HAP-1 (cell line): ENCODE measurements at regions of chr3 and their contacts with region 1.

Region 1: GRCh38 chr3:47522082-47522987 is 8.8 kb upstream of the ELP6 start:
- DNase-seq: peak; percentile 92
- H3K4me3 ChIP-seq: no peak overlapping the region
- H3K4me1 ChIP-seq: peaks cover 17% of the 10 kb centered on the region
- H3K27me3 ChIP-seq: no peaks in the 10 kb centered on the region

Region 2: GRCh38 chr3:47781685-47782445 is 259.5 kb after region 1 on chr3 and contains the start of gene SMARCC1:
- in situ Hi-C with region 1: loop called (anchors 5 kb)
- DNase-seq: peak; percentile 94 to 99
- H3K4me3 ChIP-seq: peak within 1 kb of the TSS; percentile 57
- H3K4me1 ChIP-seq: peaks cover 10% of the 10 kb centered on the region
- H3K27me3 ChIP-seq: no peaks in the 10 kb centered on the region